Sigmoid colon (tissue), 7 donors: ENCODE measurements at regions of chr9 and their contacts with region 1.

Region 1: DNA sequence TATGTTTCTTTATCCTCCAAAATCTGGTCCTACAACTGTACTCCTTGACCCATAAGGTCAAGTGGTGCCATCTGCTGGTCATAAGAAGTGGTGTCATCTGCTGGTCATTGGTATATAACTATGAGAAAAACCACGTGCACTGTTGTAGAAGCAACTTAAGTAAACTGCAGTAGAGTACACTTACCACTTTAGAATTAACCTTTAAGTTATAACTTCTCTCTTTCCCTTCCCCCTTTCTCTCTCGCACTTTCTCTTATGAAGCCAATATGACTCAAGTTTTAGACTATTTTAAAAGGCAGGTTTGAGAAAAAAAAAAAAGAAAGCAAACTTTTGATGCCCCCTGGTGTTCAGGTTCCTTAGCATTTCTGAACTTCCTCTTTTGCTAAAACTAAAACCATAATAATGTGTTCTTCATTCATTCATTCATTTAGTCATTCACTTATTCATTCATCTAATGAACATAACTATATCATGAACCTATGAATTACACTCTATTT is 12.8 kb upstream of the MTAP start:
- DNase-seq: no peak
- H3K4me3 ChIP-seq: peak overlapping the region in 2 of 4 donors; percentile 26 to 27
- H3K27ac ChIP-seq: no peak overlapping the region
- H3K4me1 ChIP-seq: no peaks in the 10 kb centered on the region
- H3K27me3 ChIP-seq: no peaks in the 10 kb centered on the region
- CTCF ChIP-seq: peak; percentile 46 to 78 (median 70)
- EP300 ChIP-seq: no peak
- POLR2A ChIP-seq: no peak

Region 2: GRCh38 chr9:21239911-21240310 is 549.7 kb before region 1 on chr9 and contains the start of gene IFNA14:
- intact Hi-C with region 1: loop called (anchors 5 kb)
- DNase-seq: no peak
- H3K4me3 ChIP-seq: no peak within 1 kb of the TSS
- H3K27ac ChIP-seq: no peak within 1 kb of the TSS
- H3K4me1 ChIP-seq: no peaks in the 10 kb centered on the region
- H3K27me3 ChIP-seq: no peaks in the 10 kb centered on the region
- CTCF ChIP-seq: no peak
- EP300 ChIP-seq: no peak
- POLR2A ChIP-seq: no peak
- total RNA-seq, gene IFNA14: not detected

Region 3: DNA sequence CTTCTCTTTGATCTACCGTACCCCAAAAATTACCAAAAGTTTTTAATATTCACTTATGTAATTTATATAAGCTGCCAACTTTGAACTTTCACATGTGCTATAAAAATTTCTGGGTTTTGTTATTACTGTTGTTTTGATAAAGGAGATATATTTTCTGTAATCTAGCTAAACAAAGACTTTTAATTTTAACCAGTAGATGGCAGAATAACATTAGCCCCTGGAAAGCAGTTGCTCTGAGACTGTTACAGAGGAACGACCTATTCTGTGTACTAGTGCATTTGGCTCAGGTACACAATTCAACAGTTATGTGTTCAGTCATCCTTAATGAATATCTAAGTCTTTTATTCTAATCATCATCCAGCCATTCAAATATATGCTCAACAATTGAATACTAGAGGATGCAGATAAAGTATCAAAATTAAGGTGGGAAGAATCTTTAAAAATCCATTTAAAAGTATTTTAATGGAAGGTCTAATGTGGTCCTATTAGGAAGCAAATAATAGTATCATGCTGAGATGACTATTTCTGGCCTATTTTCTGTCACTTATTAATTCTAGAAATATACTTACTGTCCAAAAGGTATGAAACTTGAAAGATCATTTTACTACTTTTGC is 463.0 kb before region 1 on chr9:
- intact Hi-C with region 1: loop called (anchors 5 kb)
- DNase-seq: no peak
- H3K4me3 ChIP-seq: no peak overlapping the region
- H3K27ac ChIP-seq: no peak overlapping the region
- H3K4me1 ChIP-seq: peaks cover 0 to 62% (median 35%) of the 10 kb centered on the region in 4 donors
- H3K27me3 ChIP-seq: no peaks in the 10 kb centered on the region
- CTCF ChIP-seq: peak; percentile 28 to 59 (median 34)
- EP300 ChIP-seq: no peak
- POLR2A ChIP-seq: no peak

Region 4: GRCh38 chr9:21465859-21466518 is 323.6 kb before region 1 on chr9:
- intact Hi-C with region 1: loop called (anchors 5 kb)
- DNase-seq: no peak
- H3K4me3 ChIP-seq: no peak overlapping the region
- H3K27ac ChIP-seq: no peak overlapping the region
- H3K4me1 ChIP-seq: no peaks in the 10 kb centered on the region
- H3K27me3 ChIP-seq: no peaks in the 10 kb centered on the region
- CTCF ChIP-seq: peak in 1 of 4 experiments; percentile 42
- EP300 ChIP-seq: no peak
- POLR2A ChIP-seq: no peak

Region 5: GRCh38 chr9:21709464-21710058 is 80.0 kb before region 1 on chr9:
- intact Hi-C with region 1: no loop called
- DNase-seq: no peak
- H3K4me3 ChIP-seq: no peak overlapping the region
- H3K27ac ChIP-seq: no peak overlapping the region
- H3K4me1 ChIP-seq: no peaks in the 10 kb centered on the region
- H3K27me3 ChIP-seq: no peaks in the 10 kb centered on the region
- CTCF ChIP-seq: peak in 3 of 4 experiments; percentile 18 to 71 (median 58)
- EP300 ChIP-seq: no peak
- POLR2A ChIP-seq: no peak